Activated CD4-positive, alpha-beta T cell treated with anti-CD3 and anti-CD28 coated beads for 36 hours (primary cell): ENCODE measurements at regions of chr12 and their contacts with region 1.

Region 1: GRCh38 chr12:6570264-6570887 is 2.3 kb upstream of the NOP2 start:
- DNase-seq: peak; percentile 76
- ATAC-seq: no peak
- H3K4me3 Mint-ChIP-seq: peak overlapping the region; percentile 89
- H3K27ac Mint-ChIP-seq: peak overlapping the region; percentile 66
- H3K4me1 Mint-ChIP-seq: peaks cover 62% of the 10 kb centered on the region
- H3K27me3 Mint-ChIP-seq: no peaks in the 10 kb centered on the region

Region 2: DNA sequence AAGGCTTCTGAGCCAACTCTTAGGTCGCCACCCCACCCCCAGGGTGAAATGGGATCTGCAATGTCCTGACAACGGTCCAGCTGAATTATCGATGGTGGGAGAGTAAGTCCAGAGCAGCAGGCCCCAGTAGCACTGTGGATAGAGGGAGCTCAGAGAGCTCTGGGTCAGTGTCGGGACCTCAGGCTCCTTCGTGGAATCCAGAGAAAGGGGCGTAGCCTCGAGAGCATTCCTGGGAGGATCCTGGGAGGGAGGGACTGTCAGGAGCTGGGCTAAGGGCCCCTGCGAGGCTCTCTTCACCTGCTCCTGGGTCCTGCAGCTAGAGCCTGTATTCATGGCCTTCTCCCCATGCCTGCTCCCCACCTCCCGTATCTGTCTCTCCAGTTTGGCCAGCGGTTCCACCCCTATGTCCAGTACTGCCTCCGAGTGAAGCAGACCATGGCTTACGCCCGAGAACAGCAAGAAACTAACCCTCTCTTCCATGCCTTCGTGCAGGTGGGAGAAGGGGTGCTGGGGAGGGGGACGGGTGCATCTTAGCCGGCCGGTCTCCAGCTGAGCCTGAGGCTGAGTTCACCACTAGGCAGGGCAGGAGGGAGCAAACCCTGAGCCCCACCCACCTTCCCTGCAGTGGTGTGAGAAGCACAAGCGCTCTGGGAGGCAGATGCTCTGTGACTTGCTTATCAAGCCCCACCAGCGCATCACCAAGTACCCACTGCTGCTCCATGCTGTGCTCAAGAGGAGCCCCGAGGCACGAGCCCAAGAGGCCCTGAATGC is 253.3 kb before region 1 on chr12:
- CTCF ChIA-PET with region 1: no interaction called
- POLR2A ChIA-PET with region 1: no interaction called
- intact Hi-C with region 1: no loop called
- DNase-seq: no peak
- ATAC-seq: no peak
- H3K4me3 Mint-ChIP-seq: no peak overlapping the region
- H3K27ac Mint-ChIP-seq: no peak overlapping the region
- H3K4me1 Mint-ChIP-seq: peaks cover 18% of the 10 kb centered on the region
- H3K27me3 Mint-ChIP-seq: no peaks in the 10 kb centered on the region

Region 3: DNA sequence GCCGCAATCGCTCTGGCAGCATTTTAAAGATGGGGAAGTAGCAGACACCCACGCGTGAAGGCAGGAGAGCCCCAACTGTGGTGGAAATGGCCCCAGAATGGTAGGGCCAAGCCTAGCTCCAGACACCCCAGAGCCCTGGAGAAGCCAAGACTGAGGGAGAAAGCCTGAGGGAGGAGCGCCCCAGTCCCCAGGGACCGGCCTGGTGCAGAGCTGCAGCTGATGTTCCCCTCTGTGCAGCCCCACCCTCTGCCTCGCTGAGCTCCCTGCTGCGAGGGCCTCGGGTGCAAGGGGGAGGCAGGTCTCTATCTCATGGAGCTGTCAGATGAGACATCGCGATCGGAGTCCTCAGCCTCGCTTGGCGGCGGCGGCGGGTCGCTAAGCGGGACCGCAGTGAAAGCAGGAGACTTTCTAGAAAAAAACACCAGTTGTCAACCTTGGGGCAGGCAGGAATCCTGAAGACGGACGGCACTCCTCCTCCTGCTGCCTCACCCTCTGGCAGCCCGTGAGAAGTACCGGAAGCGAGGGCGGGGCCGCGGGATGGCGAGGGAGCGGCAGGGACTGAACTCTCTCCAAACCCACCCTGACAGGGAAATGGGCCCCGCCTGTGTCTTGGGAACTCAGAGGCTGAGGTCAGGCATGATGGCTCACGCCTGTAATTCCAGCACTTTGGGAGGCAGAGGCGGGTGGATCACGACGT is 30.0 kb before region 1 on chr12:
- CTCF ChIA-PET with region 1: interaction called, 10 read pairs
- POLR2A ChIA-PET with region 1: interaction called, 3 read pairs
- intact Hi-C with region 1: no loop called
- DNase-seq: peak; percentile 72
- ATAC-seq: peak; percentile 24
- H3K4me3 Mint-ChIP-seq: peak overlapping the region; percentile 45
- H3K27ac Mint-ChIP-seq: peak overlapping the region; percentile 73
- H3K4me1 Mint-ChIP-seq: peaks cover 53% of the 10 kb centered on the region
- H3K27me3 Mint-ChIP-seq: no peaks in the 10 kb centered on the region

Region 4: DNA sequence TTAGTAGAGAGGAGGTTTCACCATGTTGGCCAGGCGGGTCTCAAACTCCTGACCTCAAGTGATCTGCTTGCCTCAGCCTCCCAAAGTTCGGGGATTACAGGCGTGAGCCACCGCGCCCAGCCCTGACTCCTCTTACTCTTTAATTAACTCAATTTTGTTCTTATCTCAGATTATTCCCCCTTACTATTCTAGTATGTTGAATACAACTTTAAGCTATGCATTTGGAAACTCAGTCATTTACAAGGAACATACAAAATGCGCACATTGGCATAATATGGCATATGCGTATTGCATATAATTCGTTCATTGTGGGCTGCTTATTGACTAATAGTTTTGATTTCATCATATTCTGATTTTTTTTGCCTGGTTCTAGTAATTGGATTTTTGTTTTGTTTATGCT is 944.0 kb after region 1 on chr12:
- CTCF ChIA-PET with region 1: no interaction called
- POLR2A ChIA-PET with region 1: no interaction called
- intact Hi-C with region 1: no loop called
- DNase-seq: no peak
- ATAC-seq: no peak
- H3K4me3 Mint-ChIP-seq: no peak overlapping the region
- H3K27ac Mint-ChIP-seq: no peak overlapping the region
- H3K4me1 Mint-ChIP-seq: no peaks in the 10 kb centered on the region
- H3K27me3 Mint-ChIP-seq: peaks cover 6% of the 10 kb centered on the region